ENCODE measurements at regions of chr3 and their contacts with region 1.

Region 1: GRCh38 chr3:29280404-29281093 is at the start of gene RBMS3:
- DNase-seq: peak; percentile 66
- H3K4me3 Mint-ChIP-seq: peak within 1 kb of the TSS; percentile 64
- H3K27ac Mint-ChIP-seq: peak within 1 kb of the TSS; percentile 53
- H3K4me1 Mint-ChIP-seq: peaks cover 32% of the 10 kb centered on the region
- H3K27me3 Mint-ChIP-seq: no peaks in the 10 kb centered on the region
- CTCF ChIP-seq: no peak
- total RNA-seq, gene RBMS3: 1.3 TPM in 2 replicates

Region 2: GRCh38 chr3:28835751-28836150 is 444.8 kb before region 1 on chr3:
- CTCF ChIA-PET with region 1: no interaction called
- intact Hi-C with region 1: no loop called
- DNase-seq: peak; percentile 5
- H3K4me3 Mint-ChIP-seq: no peak overlapping the region
- H3K27ac Mint-ChIP-seq: no peak overlapping the region
- H3K4me1 Mint-ChIP-seq: no peaks in the 10 kb centered on the region
- H3K27me3 Mint-ChIP-seq: no peaks in the 10 kb centered on the region
- CTCF ChIP-seq: no peak

Region 3: GRCh38 chr3:28916713-28917499 is 363.6 kb before region 1 on chr3:
- CTCF ChIA-PET with region 1: no interaction called
- intact Hi-C with region 1: loop called (anchors 10 kb)
- DNase-seq: peak; percentile 2
- H3K4me3 Mint-ChIP-seq: no peak overlapping the region
- H3K27ac Mint-ChIP-seq: no peak overlapping the region
- H3K4me1 Mint-ChIP-seq: no peaks in the 10 kb centered on the region
- H3K27me3 Mint-ChIP-seq: no peaks in the 10 kb centered on the region
- CTCF ChIP-seq: no peak

Measured in Calu3 (cell line).